Lower leg skin (tissue), 4 donors: ENCODE measurements at regions of chr7 and their contacts with region 1.

Region 1: DNA sequence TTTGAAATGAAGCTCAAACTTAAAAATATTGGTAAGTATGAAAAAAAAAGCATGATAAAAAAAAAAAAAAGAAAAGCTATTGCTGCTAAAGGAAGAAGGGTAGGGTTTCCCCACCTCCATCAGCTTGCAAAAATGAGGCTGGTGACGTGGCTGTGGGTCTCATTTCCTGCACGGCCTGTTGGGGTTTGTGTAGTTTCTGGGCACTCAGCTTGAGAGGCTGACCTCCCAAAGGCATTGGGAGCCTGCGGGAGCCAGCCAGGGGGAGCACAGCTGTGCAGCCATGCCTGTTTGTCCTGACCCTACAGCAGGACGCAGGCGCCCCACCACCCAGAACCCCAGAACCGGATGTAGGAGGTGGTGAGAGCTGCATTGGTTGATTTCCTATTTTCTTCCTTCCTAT is 48.8 kb upstream of the CARD11 start:
- DNase-seq: peak in 1 of 2 donors; percentile 24
- H3K4me3 ChIP-seq: no peak overlapping the region
- CTCF ChIP-seq: no peak
- POLR2A ChIP-seq: no peak

Region 2: DNA sequence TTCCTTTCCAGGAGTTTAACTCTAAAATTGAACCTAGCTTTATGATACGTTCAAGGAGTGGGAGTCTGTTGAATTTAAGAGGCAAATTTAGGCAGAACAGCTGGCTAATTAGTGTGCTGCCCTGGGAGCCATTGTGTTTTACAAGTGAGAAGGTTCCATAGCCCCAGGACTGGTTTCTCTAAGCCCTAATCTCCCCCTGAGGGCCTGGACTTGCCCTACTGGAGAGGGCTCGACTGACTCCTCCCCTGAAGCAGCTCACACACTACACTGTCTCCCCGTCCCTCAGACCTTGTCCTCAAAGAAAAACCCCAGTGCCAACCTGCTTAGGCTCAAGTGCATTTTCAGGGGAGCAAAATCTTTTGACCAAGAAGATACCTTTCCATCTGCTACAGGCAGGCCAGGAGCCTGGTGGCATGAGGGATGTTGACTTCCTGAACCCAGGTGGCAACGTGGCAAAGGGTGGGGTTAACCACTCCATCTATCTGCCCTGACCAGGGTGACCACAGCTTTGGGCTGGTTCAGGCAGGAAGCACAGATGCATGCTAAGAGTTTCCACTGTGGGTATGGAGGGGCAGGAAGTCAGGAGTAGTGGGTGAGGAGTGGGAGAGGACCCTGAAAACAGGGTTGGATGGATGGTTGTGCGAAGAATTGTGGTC is 20.1 kb after region 1 on chr7:
- intact Hi-C with region 1: loop called (anchors 1 kb)
- DNase-seq: peak in 1 of 2 donors; percentile 76
- H3K4me3 ChIP-seq: no peak overlapping the region
- CTCF ChIP-seq: no peak
- POLR2A ChIP-seq: no peak

Region 3: GRCh38 chr7:3616306-3616705 is 523.8 kb after region 1 on chr7:
- intact Hi-C with region 1: no loop called
- DNase-seq: no peak
- H3K4me3 ChIP-seq: no peak overlapping the region
- CTCF ChIP-seq: no peak
- POLR2A ChIP-seq: no peak

Region 4: GRCh38 chr7:4345004-4345403 is 1252.5 kb after region 1 on chr7:
- intact Hi-C with region 1: no loop called
- DNase-seq: no peak
- H3K4me3 ChIP-seq: no peak overlapping the region
- CTCF ChIP-seq: no peak
- POLR2A ChIP-seq: no peak